ENCODE measurements at regions of chr7 and their contacts with region 1.

Region 1: GRCh38 chr7:129489491-129489890 is 12.8 kb upstream of the SMKR1 start:
- DNase-seq: no peak
- H3K4me3 ChIP-seq: no peak overlapping the region
- H3K27ac ChIP-seq: no peak overlapping the region
- H3K4me1 ChIP-seq: no peaks in the 10 kb centered on the region
- H3K27me3 ChIP-seq: no peaks in the 10 kb centered on the region
- CTCF ChIP-seq: no peak

Region 2: GRCh38 chr7:129110258-129110981 is 379.1 kb before region 1 on chr7:
- intact Hi-C with region 1: no loop called
- DNase-seq: no peak
- H3K4me3 ChIP-seq: no peak overlapping the region
- H3K27ac ChIP-seq: no peak overlapping the region
- H3K4me1 ChIP-seq: no peaks in the 10 kb centered on the region
- H3K27me3 ChIP-seq: peaks cover 17% of the 10 kb centered on the region
- CTCF ChIP-seq: no peak

Region 3: DNA sequence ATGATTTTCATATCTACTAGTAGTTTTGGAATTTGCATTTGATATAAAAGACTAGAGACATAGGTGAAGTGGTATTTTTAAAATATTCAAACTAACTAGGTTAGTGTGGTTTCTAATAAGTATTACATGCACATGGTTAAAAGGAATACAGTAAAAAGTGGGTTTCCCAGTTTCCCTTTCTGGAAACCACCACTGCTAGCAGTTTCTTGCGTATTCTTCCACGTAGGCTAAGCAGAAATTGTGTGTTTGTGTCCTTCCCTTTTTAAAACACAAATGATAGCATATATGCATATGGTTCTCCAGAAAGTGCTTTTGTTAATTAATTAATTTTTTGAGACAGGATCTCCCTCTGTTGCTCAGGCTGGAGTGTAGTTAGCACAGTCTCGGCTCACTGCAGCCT is 137.4 kb after region 1 on chr7:
- intact Hi-C with region 1: loop called (anchors 10 kb)
- DNase-seq: no peak
- H3K4me3 ChIP-seq: no peak overlapping the region
- H3K27ac ChIP-seq: no peak overlapping the region
- H3K4me1 ChIP-seq: peaks cover 4% of the 10 kb centered on the region
- H3K27me3 ChIP-seq: no peaks in the 10 kb centered on the region
- CTCF ChIP-seq: no peak

Region 4: DNA sequence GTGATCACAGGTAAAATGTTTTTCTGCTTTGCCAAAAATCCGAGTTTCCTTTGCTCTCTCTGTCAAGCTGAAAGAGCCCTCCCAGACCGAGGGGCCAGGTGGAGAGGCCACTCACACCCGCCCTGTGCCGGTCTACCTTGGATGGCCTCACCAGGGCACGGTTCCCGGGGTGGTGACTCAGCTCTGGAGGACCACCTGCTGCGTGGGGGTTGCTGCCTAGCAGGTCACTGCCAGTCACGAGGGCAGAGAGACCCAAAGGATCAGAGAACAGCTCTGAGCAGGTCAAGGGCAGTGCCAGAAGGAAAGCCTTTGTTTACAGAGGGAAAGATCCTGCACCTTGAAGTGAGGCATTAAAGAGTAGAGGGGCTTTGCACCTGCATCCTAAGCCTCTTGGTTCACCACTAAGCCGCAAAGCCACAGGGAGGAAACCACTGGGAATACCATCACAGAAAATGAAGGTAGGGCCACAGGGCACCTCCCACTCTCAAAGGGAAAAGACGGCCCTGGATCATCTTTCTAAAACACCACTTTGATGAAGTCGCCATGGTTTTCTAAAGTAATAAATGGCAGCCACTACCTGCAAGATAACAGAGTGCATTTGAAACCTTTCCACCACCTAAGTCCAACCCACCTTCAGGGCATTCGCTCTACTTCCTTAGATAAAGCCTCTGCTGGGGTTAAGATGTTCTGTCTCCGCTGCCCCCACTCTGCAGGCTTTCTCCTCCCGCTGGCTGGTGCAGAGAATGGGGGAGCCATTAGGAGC is 1404.8 kb after region 1 on chr7:
- intact Hi-C with region 1: no loop called
- DNase-seq: peak; percentile 78
- H3K4me3 ChIP-seq: no peak overlapping the region
- H3K27ac ChIP-seq: peak overlapping the region; percentile 84
- H3K4me1 ChIP-seq: peaks cover 93% of the 10 kb centered on the region
- H3K27me3 ChIP-seq: no peaks in the 10 kb centered on the region
- CTCF ChIP-seq: no peak

Measured in left ventricle myocardium inferior (tissue), 1 donor.